Activated CD4-positive, alpha-beta T cell treated with anti-CD3 and anti-CD28 coated beads for 36 hours (primary cell): ENCODE measurements at regions of chr1 and their contacts with region 1.

Region 1: DNA sequence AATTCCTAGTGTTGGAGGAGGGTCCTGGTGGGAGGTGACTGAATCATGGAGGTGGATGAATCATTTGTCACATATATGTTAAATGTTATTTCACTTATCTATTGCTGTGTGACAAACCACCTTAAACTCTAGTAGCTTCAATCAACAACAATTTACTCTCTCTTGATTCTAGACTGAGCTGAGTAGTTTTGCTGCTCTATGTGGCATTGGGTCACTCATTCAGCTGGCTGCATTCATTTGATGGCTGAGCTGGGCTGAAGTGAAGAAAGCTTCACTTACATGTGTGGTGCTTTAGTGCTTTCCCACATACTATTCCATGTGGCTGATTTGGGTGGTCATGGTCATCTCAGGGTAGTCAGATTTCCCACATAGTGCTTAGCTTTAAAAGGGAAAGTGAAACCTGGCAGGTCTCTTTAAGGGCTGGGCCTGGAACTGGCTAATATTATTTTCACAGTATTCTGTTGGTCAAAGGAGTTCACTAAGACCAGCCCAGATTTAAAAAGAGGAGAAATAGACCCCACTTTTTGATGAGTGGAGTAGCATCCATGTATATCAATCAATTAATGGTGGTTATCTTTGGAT is 10.5 kb downstream of the DNAH14 start:
- DNase-seq: no peak
- ATAC-seq: no peak
- H3K4me3 Mint-ChIP-seq: no peak overlapping the region
- H3K27ac Mint-ChIP-seq: no peak overlapping the region
- H3K4me1 Mint-ChIP-seq: no peaks in the 10 kb centered on the region
- H3K27me3 Mint-ChIP-seq: peaks cover 2% of the 10 kb centered on the region

Region 2: GRCh38 chr1:225063722-225064121 is 123.8 kb after region 1 on chr1:
- CTCF ChIA-PET with region 1: no interaction called
- POLR2A ChIA-PET with region 1: no interaction called
- intact Hi-C with region 1: loop called in 1 of 2 experiments (anchors 5 kb)
- DNase-seq: no peak
- ATAC-seq: no peak
- H3K4me3 Mint-ChIP-seq: no peak overlapping the region
- H3K27ac Mint-ChIP-seq: no peak overlapping the region
- H3K4me1 Mint-ChIP-seq: no peaks in the 10 kb centered on the region
- H3K27me3 Mint-ChIP-seq: peaks cover 11% of the 10 kb centered on the region

Region 3: GRCh38 chr1:225467193-225468020 is 527.5 kb after region 1 on chr1:
- CTCF ChIA-PET with region 1: no interaction called
- POLR2A ChIA-PET with region 1: no interaction called
- intact Hi-C with region 1: no loop called
- DNase-seq: peak; percentile 90
- ATAC-seq: peak; percentile 90
- H3K4me3 Mint-ChIP-seq: peak overlapping the region; percentile 85
- H3K27ac Mint-ChIP-seq: peak overlapping the region; percentile 98
- H3K4me1 Mint-ChIP-seq: peaks cover 25% of the 10 kb centered on the region
- H3K27me3 Mint-ChIP-seq: no peaks in the 10 kb centered on the region